ENCODE measurements at regions of chr17 and their contacts with region 1.

Region 1: DNA sequence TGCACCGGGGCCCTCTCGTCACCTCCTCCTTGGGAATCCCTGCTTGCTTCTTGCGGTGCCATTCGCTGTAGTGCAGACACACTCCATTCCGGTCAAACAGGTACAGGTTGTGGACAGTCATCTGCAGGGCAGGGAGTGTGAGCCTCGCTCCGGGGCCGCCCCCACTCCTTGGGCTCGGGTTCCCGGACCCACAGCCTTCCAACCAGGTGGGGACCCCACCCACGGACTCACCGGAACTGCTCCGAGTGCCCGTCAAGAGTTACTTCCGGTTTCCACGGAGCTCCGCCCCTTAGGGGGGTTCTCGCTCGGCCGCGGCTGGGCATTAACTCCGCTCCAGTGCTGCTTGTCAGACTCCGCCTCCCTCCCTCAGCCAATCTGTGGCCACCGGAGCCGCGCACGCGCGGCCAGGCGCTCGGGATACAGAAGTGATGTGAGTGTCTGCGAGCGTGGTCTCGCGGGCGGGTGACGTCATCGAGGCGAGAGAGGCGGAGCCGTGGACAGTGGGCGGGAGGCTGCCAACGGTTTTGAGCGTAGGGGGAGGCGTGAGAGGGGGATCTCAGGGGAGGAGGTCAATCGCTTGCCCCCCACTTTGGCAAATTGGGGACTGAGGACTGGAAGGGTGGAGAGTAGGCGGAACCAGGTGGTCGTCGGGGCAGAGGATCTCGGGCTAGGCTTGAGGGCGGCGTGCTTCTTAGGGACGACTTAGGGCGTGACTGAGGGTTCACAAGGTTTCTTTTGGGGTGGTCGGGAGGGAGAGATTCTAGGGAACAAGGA is at the starts of genes CNTROB and TRAPPC1:
- DNase-seq: peak; percentile 100
- H3K4me3 Mint-ChIP-seq: peak within 1 kb of the TSS; percentile 99
- H3K27ac Mint-ChIP-seq: peak within 1 kb of the TSS; percentile 99
- H3K4me1 Mint-ChIP-seq: peaks cover 42% of the 10 kb centered on the region
- H3K27me3 Mint-ChIP-seq: no peaks in the 10 kb centered on the region
- total RNA-seq, gene CNTROB: 53.5 and 54.7 TPM in 2 replicates
- total RNA-seq, gene TRAPPC1: 153 and 162 TPM in 2 replicates

Region 2: GRCh38 chr17:7844292-7845154 is 87.4 kb before region 1 on chr17:
- intact Hi-C with region 1: loop called (anchors 2 kb)
- DNase-seq: peak; percentile 87
- H3K4me3 Mint-ChIP-seq: peak overlapping the region; percentile 89
- H3K27ac Mint-ChIP-seq: peak overlapping the region; percentile 96
- H3K4me1 Mint-ChIP-seq: peaks cover 37% of the 10 kb centered on the region
- H3K27me3 Mint-ChIP-seq: no peaks in the 10 kb centered on the region

Region 3: GRCh38 chr17:7887482-7888183 is 44.3 kb before region 1 on chr17:
- intact Hi-C with region 1: loop called (anchors 1 kb)
- DNase-seq: peak; percentile 77
- H3K4me3 Mint-ChIP-seq: no peak overlapping the region
- H3K27ac Mint-ChIP-seq: no peak overlapping the region
- H3K4me1 Mint-ChIP-seq: peaks cover 3% of the 10 kb centered on the region
- H3K27me3 Mint-ChIP-seq: no peaks in the 10 kb centered on the region

Region 4: DNA sequence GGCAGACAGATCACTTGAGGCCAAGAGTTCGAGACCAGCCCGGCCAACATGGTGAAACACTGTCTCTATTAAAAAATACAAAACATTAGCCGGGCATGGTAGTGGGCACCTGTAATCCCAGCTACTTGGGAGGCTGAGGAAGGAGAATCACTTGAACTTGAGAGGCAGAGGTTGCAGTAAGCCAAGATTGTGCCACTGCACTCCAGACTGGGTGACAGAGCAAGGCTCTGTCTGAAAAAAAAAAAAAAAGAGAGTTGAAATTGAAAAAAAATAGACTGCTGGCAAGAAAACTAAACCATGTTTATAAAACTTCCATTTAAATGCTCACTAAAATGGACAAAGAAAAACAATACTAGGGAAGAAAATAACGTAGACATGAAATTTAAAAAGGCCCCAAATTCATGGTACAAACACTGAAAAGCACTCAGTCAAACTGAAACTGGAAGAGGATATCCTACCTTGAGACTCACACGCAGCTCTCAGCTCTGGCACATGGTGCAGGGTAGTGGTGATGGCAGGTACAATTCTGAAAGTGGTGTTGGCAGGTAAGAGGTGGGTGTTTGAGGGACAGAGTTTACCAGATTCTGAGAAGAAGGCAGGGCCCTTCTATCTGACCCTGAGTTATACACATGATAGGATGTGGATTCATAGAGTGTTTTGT is 19.4 kb after region 1 on chr17:
- intact Hi-C with region 1: loop called (anchors 1 kb)
- DNase-seq: peak; percentile 44
- H3K4me3 Mint-ChIP-seq: peak overlapping the region; percentile 40
- H3K27ac Mint-ChIP-seq: peak overlapping the region; percentile 91
- H3K4me1 Mint-ChIP-seq: peaks cover 15% of the 10 kb centered on the region
- H3K27me3 Mint-ChIP-seq: no peaks in the 10 kb centered on the region

Region 5: GRCh38 chr17:8156246-8156992 is 224.5 kb after region 1 on chr17:
- intact Hi-C with region 1: loop called (anchors 1 kb)
- DNase-seq: peak; percentile 100
- H3K4me3 Mint-ChIP-seq: no peak overlapping the region
- H3K27ac Mint-ChIP-seq: no peak overlapping the region
- H3K4me1 Mint-ChIP-seq: peaks cover 56% of the 10 kb centered on the region
- H3K27me3 Mint-ChIP-seq: no peaks in the 10 kb centered on the region

Measured in activated T-helper 1 cell treated with anti-CD3 and anti-CD28 coated beads, Interleukin-12 subunit alpha, Interleukin-12 subunit beta, Interleukin-2, Interleukin-4 antibody, amounts not matched to agents 30 ng/mL and 10 ng/mL and 1 ng/mL, durations not matched to agents 14 hours and 24 hours and 36 hours (primary cell).